ENCODE measurements at regions of chr3 and their contacts with region 1.

Region 1: GRCh38 chr3:38496131-38496910 is at the start of gene EXOG:
- DNase-seq: peak; percentile 96
- ATAC-seq: peak; percentile 92
- H3K4me3 Mint-ChIP-seq: peak within 1 kb of the TSS; percentile 94
- H3K27ac Mint-ChIP-seq: peak within 1 kb of the TSS; percentile 93
- H3K4me1 Mint-ChIP-seq: peaks cover 23% of the 10 kb centered on the region
- H3K27me3 Mint-ChIP-seq: no peaks in the 10 kb centered on the region
- total RNA-seq, gene EXOG: 19.7 to 23.8 TPM

Region 2: DNA sequence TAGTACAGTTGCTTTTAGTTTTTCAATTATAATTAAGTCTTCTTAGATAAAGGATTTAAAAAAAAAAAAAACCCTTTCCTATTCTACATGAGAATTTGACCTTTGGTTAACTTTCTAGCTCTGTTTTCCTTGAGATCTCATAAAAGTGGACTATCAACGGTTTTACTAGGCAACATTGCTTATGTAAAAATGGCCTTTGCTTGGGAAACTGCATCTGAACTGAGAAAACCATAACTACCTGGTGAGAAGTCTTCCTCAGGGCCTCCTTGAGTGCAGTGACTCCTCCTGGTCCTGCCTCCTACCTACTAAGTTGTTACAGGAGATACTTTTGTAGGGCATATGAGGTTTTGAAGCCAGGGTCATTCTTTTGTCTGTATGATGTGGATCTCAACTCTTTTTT is 84.7 kb before region 1 on chr3:
- CTCF ChIA-PET with region 1: no interaction called
- DNase-seq: no peak
- ATAC-seq: no peak
- H3K4me3 Mint-ChIP-seq: no peak overlapping the region
- H3K27ac Mint-ChIP-seq: no peak overlapping the region
- H3K4me1 Mint-ChIP-seq: no peaks in the 10 kb centered on the region
- H3K27me3 Mint-ChIP-seq: no peaks in the 10 kb centered on the region

Region 3: DNA sequence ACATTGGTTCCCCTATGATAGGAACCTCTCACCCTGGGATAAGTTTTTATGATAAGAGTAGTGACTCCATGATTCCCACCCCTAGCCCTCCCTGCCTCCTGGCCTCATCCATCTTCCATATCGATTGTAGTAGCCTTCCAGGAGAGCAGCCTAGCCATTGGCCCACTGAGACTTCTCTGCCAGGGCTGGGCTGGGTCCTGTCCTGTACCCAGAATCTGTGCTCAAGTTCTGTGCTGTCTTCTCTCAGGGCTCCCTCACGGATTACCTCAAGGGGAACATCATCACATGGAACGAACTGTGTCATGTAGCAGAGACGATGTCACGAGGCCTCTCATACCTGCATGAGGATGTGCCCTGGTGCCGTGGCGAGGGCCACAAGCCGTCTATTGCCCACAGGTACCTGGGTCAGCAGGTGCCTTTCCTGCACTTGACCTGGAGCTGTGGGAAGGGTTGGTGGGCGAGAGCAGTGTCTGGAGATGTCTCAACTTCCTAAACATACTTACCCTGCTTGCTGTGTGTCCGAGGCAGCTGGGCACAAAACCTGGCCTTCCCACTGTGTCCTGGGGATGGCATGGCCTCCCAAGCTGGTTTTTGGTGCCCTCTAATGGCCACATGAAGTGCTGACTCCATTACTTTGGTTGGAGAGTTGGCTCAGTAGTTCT is 16.8 kb before region 1 on chr3:
- CTCF ChIA-PET with region 1: interaction called, 20 read pairs
- DNase-seq: peak; percentile 60
- ATAC-seq: peak; percentile 75
- H3K4me3 Mint-ChIP-seq: no peak overlapping the region
- H3K27ac Mint-ChIP-seq: no peak overlapping the region
- H3K4me1 Mint-ChIP-seq: no peaks in the 10 kb centered on the region
- H3K27me3 Mint-ChIP-seq: no peaks in the 10 kb centered on the region

Region 4: GRCh38 chr3:38507120-38507519 is 10.8 kb after region 1 on chr3:
- CTCF ChIA-PET with region 1: interaction called, 18 read pairs
- DNase-seq: no peak
- ATAC-seq: no peak
- H3K4me3 Mint-ChIP-seq: no peak overlapping the region
- H3K27ac Mint-ChIP-seq: no peak overlapping the region
- H3K4me1 Mint-ChIP-seq: no peaks in the 10 kb centered on the region
- H3K27me3 Mint-ChIP-seq: no peaks in the 10 kb centered on the region

Region 5: DNA sequence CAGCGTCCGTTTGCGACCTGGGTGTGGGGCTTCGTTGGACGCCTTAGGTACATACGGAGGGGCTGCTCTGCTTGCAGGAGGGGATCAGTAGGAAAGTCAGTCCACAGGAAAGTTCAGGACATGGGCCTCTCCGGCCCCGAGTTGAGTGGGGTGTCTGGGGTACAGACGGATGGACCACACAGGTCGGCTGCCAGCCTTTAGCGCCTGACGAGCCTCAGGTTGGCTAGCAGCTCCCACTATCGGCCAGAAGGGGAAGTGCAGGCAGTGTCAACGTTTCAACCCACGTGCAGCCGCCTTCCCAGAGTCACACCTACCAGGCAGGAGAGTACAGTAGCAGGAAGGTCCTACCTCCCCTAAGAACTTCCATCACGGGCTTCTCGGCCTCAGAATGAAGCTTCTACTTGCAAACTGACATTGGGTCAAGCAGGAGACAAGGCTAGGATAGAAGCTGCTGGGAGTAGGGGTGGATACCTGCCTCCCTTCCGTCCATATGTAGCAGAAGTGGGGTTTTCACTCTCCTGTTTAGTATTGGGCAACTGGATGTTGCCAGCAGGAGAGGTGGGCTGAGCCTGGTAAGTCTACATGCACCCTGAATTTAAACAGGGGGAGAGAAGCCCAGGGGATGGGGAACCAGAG is 155.0 kb after region 1 on chr3:
- CTCF ChIA-PET with region 1: interaction called, 23 read pairs
- DNase-seq: peak; percentile 77
- ATAC-seq: peak; percentile 57
- H3K4me3 Mint-ChIP-seq: no peak overlapping the region
- H3K27ac Mint-ChIP-seq: no peak overlapping the region
- H3K4me1 Mint-ChIP-seq: peaks cover 8% of the 10 kb centered on the region
- H3K27me3 Mint-ChIP-seq: peaks cover 20% of the 10 kb centered on the region

Region 6: GRCh38 chr3:39000008-39000450 is 503.7 kb after region 1 on chr3:
- CTCF ChIA-PET with region 1: interaction called, 16 read pairs
- DNase-seq: no peak
- ATAC-seq: peak; percentile 65
- H3K4me3 Mint-ChIP-seq: no peak overlapping the region
- H3K27ac Mint-ChIP-seq: no peak overlapping the region
- H3K4me1 Mint-ChIP-seq: no peaks in the 10 kb centered on the region
- H3K27me3 Mint-ChIP-seq: peaks cover 20% of the 10 kb centered on the region